Heart left ventricle (tissue), 16 donors: ENCODE measurements at regions of chr14 and their contacts with region 1.

Region 1: DNA sequence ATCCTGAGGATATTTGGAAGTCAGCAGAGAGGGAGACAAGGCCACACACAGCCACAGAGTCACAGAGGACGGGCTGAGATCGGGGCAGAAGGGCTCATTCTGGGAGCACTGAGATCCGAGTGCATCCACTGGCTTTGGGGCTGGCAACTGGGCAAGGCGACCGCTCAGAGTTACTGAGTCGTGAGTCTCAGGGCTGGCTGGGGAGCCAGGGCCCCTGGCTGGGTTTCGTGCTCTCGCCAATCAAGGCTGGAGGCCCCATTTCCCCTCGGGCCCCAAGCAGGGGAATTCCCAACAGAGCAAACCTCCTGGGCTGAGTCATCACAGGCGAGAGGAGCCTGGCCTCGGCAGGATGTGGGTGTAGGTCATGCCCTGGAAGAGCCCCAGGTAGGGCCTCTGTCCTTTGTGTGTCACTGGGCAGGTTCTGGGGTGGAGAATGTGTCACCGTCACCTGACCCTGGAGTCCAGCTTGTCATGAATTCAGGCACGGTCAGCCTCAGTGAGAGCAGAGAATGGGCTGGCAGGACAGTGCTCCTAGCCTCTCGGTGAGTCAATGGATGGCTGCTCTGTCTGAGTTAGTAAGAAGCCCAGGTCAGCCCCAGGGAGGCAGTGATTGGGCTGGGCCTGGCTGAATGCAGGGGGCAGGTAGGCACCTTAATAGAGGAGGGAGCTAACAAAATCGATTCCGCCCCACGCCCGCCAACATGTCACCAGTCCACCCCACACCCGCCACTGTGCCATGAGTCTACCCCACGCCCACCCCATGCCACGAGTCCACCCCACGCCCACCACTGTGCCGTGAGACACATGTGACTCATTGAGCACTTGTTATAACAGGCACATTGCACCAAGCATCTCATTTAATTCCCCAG is 16.9 kb downstream of the ASB2 start:
- DNase-seq: peak; percentile 56 to 78 (median 59)
- ATAC-seq: peak in 3 of 4 donors; percentile 17 to 55 (median 54)
- H3K4me3 ChIP-seq: no peak overlapping the region
- H3K27ac ChIP-seq: peak overlapping the region in 11 of 12 donors; percentile 6 to 87 (median 77)
- H3K4me1 ChIP-seq: peaks cover 3 to 95% (median 53%) of the 10 kb centered on the region in 12 donors
- H3K27me3 ChIP-seq: no peaks in the 10 kb centered on the region
- CTCF ChIP-seq: no peak
- POLR2A ChIP-seq: no peak

Region 2: DNA sequence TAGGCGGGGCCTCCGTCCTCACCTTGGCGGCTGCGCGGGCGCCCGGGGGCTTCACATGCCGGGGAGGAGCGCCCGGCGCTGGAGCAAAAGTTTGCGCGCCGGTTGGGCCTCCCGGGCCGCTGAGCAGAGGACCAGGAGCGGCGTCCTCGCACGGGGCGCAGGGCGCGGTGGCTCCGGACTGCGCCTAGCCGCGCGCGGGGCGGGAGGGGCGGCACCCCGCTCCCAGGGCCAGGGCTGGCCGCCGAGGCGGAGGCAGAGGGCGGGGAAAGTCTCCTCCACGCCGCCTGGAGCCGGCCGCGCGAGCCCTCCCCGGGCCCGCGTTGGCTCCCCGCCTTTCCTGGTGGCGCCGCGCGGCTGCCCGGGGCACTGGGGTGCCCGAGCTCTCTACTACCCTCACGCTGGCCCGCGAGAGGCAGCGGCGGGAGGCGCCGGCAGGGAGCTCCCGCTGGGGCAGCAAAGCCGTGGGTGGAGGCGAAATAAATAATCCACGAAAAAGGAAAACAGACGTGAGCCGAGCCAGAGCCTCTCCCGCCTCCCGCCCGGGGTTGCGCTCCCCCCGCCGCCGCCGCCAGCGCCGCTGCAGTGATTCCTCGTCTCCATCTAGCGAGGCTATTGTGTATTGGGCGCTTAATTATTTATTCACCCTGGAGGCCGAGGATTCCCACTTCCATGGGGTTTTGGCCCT is 170.8 kb before region 1 on chr14:
- intact Hi-C with region 1: no loop called
- DNase-seq: peak; percentile 38 to 68 (median 50)
- ATAC-seq: peak; percentile 75 to 92 (median 88)
- H3K4me3 ChIP-seq: peak overlapping the region; percentile 37 to 69 (median 57)
- H3K27ac ChIP-seq: peak overlapping the region in 10 of 12 donors; percentile 14 to 86 (median 64)
- H3K4me1 ChIP-seq: peaks cover 0 to 24% (median 5%) of the 10 kb centered on the region in 12 donors
- H3K27me3 ChIP-seq: peaks cover 0 to 35% (median 2%) of the 10 kb centered on the region in 9 donors
- CTCF ChIP-seq: peak in 10 of 12 donors; percentile 26 to 60 (median 51)
- POLR2A ChIP-seq: peak in 1 of 2 donors; percentile 51

Region 3: DNA sequence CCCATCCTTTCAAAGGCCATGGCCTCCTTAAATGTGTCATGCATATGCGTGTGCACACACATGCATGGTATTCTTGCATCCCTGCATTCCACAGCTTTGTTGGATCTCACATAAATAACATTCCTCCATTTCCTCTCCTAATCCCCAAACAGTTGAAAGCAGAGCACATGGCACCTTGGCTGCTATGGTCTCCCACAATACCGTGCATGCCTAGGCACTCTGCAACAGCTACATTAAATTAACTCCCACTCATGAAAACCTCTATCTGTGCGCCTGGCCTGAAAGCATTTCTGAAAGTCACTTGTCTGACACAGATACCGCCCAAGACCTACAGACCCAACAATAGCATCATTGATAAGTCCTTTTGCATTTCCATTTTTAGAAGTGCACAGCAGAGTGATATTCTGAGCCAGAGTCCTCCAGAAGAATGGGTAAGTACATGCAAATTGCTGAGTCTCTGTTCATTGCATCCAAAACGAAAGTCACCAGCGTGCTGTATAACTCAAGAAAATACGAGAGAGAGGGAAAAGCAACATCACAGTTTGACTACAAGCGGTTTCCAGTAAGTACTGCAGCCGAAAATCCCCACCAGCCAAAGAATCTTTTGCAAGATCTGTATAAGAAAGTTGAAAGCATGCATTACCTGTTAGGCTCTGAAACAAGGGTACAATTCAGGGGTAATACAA is 16.5 kb after region 1 on chr14:
- intact Hi-C with region 1: loop called in 1 of 10 experiments (anchors 2 kb)
- DNase-seq: no peak
- ATAC-seq: peak; percentile 43 to 63 (median 53)
- H3K4me3 ChIP-seq: peak overlapping the region; percentile 27 to 62 (median 54)
- H3K27ac ChIP-seq: peak overlapping the region; percentile 74 to 97 (median 92)
- H3K4me1 ChIP-seq: peaks cover 0 to 83% (median 24%) of the 10 kb centered on the region in 12 donors
- H3K27me3 ChIP-seq: no peaks in the 10 kb centered on the region
- CTCF ChIP-seq: peak in 1 of 12 donors; percentile 5
- POLR2A ChIP-seq: no peak

Region 4: GRCh38 chr14:93994919-93995682 is 35.6 kb after region 1 on chr14:
- intact Hi-C with region 1: loop called in 2 of 10 experiments (anchors 5 kb)
- DNase-seq: peak in 4 of 5 donors; percentile 50 to 88 (median 60)
- ATAC-seq: peak; percentile 70 to 90 (median 74)
- H3K4me3 ChIP-seq: no peak overlapping the region
- H3K27ac ChIP-seq: peak overlapping the region in 8 of 12 donors; percentile 14 to 92 (median 62)
- H3K4me1 ChIP-seq: peaks cover 0 to 48% (median 19%) of the 10 kb centered on the region in 12 donors
- H3K27me3 ChIP-seq: no peaks in the 10 kb centered on the region
- CTCF ChIP-seq: no peak
- POLR2A ChIP-seq: no peak

Region 5: GRCh38 chr14:94145902-94146527 is 186.5 kb after region 1 on chr14:
- intact Hi-C with region 1: no loop called
- DNase-seq: no peak
- ATAC-seq: no peak
- H3K4me3 ChIP-seq: no peak overlapping the region
- H3K27ac ChIP-seq: no peak overlapping the region
- H3K4me1 ChIP-seq: no peaks in the 10 kb centered on the region
- H3K27me3 ChIP-seq: peaks cover 0 to 3% (median 0%) of the 10 kb centered on the region in 9 donors
- CTCF ChIP-seq: no peak
- POLR2A ChIP-seq: no peak